ENCODE measurements at regions of chr22 and their contacts with region 1.

Region 1: DNA sequence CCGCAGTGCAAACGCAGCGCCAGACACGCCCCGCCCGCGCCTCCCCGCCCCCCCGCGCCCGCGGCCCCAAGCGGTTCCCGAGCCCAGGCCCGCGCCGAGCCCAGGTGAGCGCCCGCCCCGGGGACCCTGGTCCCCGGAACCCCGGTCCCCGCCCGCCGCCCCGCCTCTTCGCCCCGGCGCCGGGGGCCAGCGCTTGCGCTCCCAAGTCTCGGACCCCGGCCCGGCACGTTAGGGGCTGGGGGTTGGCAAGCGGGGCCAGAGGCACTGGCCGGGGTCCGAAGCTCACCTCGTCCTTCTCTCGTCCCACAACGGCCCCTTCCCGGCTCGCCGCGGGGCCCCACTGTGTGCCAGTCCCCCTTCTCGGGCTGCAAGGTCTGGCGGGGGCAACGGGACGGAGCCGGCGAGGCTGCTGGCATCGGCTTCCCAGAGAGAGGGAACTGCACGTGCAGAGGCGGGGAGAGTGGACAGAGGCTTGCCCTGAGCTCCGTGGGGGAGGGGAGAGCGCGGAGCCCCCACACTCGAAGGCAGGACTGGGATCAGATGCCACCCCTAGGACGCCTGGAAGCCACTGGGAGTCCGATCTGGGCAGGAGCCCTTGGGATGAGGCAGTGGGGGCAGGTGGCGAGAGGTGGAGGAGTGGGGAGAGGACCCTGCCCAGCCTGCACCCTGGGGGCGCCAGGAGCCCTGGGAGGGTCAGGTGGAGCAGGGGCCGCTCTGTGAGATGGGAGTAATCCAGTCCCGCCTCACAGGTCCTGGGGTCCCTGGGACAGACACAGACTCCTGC is 1.8 kb upstream of the AIFM3 start:
- DNase-seq: peak; percentile 78
- H3K4me3 ChIP-seq: peak overlapping the region in 4 of 8 donors; percentile 22 to 63 (median 34)
- H3K27ac ChIP-seq: no peak overlapping the region
- H3K4me1 ChIP-seq: peaks cover 5 to 62% (median 45%) of the 10 kb centered on the region in 6 donors
- H3K27me3 ChIP-seq: peaks cover 0 to 32% (median 16%) of the 10 kb centered on the region in 7 donors
- CTCF ChIP-seq: no peak
- POLR2A ChIP-seq: no peak

Region 2: GRCh38 chr22:21014202-21014725 is 49.0 kb after region 1 on chr22:
- intact Hi-C with region 1: loop called (anchors 10 kb)
- DNase-seq: peak; percentile 96
- H3K4me3 ChIP-seq: peak overlapping the region; percentile 32 to 74 (median 48)
- H3K27ac ChIP-seq: peak overlapping the region in 7 of 8 donors; percentile 61 to 85 (median 80)
- H3K4me1 ChIP-seq: peaks cover 13 to 37% (median 25%) of the 10 kb centered on the region in 6 donors
- H3K27me3 ChIP-seq: peaks cover 0 to 12% (median 0%) of the 10 kb centered on the region in 7 donors
- CTCF ChIP-seq: no peak
- POLR2A ChIP-seq: no peak

Region 3: DNA sequence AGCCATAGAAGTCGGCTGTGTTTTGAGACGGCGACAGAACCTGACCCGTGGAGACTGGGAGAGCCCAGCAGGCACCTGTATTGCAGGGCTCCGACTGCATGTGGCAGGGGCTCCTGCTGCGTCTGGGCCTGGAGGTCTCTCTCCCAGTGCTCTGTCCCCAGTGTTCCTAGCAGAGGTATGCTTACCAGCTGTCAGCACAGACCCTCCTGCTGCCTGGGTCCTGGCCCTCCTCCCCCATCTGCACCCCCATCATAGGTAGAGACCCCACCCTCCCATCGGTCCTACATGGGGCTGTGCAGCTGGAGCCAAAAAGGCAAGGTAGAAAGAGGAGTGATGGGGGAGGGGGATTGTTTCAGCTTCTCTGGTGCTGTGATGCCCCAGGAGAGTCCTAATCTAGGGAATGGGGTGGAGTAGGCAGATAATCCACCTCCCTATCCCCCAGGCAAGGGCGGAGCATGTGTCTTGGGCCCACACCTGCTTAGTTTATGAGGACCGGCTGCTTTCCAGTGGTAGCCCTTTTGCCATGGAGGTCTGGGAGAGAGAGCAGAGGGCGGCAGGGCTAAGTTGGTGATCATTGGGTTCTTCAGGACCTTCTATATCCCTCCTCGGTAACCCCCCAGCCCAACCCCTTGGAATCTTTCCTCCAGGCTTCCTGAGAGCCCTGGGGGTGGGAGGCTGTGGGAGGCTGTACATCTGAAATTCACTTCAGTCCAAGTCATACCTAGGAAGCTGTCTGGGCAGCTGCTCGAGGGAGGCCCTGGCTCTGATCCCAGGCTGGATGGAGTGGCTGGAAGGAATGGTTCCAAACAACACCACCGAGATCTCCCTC is 61.7 kb after region 1 on chr22:
- intact Hi-C with region 1: no loop called
- DNase-seq: no peak
- H3K4me3 ChIP-seq: no peak overlapping the region
- H3K27ac ChIP-seq: no peak overlapping the region
- H3K4me1 ChIP-seq: peaks cover 0 to 20% (median 4%) of the 10 kb centered on the region in 6 donors
- H3K27me3 ChIP-seq: peaks cover 0 to 33% (median 10%) of the 10 kb centered on the region in 7 donors
- CTCF ChIP-seq: no peak
- POLR2A ChIP-seq: no peak